Cardiac septum (tissue), 1 donor: ENCODE measurements at regions of chr13 and their contacts with region 1.

Region 1: GRCh38 chr13:41613984-41614661 is 156.8 kb downstream of the RGCC start:
- DNase-seq: peak; percentile 91

Region 2: GRCh38 chr13:41456768-41457588 is 157.1 kb before region 1 on chr13 and contains the start of gene RGCC:
- intact Hi-C with region 1: loop called (anchors 2 kb)
- DNase-seq: peak; percentile 93
- total RNA-seq, gene RGCC: 41.4 TPM

Region 3: GRCh38 chr13:41639955-41640780 is 26.0 kb after region 1 on chr13:
- intact Hi-C with region 1: loop called (anchors 1 kb)
- DNase-seq: no peak